Cardiac septum (tissue), 1 donor: ENCODE measurements at regions of chr22 and their contacts with region 1.

Region 1: GRCh38 chr22:28074526-28074925 is 155.5 kb upstream of the PITPNB start:
- DNase-seq: no peak

Region 2: GRCh38 chr22:28112548-28113043 is 38.1 kb after region 1 on chr22:
- intact Hi-C with region 1: loop called (anchors 1 kb)
- DNase-seq: peak; percentile 77

Region 3: GRCh38 chr22:28279888-28280287 is 205.4 kb after region 1 on chr22:
- intact Hi-C with region 1: no loop called
- DNase-seq: no peak